ENCODE measurements at regions of chr10 and their contacts with region 1.

Region 1: DNA sequence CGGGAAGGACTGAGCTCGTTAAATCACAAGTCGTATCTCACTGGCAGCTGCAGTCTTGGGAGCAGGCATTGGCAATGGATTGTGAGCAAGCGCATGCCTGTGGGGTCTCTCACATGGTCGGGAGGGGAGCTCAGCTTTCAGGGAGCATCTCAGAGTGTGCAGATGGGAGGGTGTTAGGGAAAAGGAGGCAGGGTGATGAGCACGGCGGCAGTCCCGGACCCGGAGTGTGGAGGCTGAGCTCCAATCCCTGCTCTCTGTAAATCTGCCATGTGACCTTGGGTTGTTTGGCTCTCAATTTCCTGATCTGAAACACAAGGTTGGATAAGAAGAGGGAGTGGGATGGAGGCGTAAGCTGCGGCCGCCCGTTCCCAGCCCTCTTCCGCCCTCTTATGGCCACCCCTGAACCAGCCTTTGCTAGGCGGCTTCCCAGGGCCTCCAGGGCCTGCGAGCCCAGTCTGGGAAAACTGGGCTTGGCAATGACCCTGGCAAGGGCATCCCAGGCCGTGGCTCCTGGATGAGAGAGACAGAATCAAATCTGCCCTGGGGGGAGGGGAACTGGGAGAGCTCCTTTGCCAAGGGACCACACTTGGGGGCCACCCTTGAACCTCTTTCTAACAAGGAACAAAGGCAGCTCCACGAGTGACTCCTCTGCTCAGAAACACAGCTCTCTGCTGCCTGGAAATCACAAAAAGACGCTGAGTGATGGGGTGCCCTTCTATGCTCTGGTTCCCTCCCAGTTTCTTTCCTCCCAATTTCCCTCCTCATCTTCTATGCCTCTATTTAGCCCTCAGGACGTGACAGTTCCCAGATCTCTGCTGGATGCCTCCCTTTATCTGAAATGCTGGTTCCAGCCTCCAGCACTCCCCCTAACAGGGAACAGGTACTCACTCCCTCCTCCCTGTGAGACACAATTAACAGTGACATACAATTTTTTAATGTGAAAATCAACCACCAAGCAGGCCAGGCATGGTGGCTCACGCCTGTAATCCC is 41.7 kb upstream of the LOXL4 start:
- DNase-seq: peak; percentile 30 to 43 (median 31)
- H3K4me3 ChIP-seq: no peak overlapping the region
- H3K27ac ChIP-seq: no peak overlapping the region
- H3K4me1 ChIP-seq: peaks cover 0 to 2% (median 0%) of the 10 kb centered on the region in 4 experiments
- H3K27me3 ChIP-seq: peaks cover 0 to 24% (median 10%) of the 10 kb centered on the region in 5 experiments

Region 2: GRCh38 chr10:98170249-98171117 is 139.2 kb before region 1 on chr10:
- CTCF ChIA-PET with region 1: interaction called, 36 read pairs
- POLR2A ChIA-PET with region 1: no interaction called
- DNase-seq: peak; percentile 39 to 51 (median 42)
- H3K4me3 ChIP-seq: no peak overlapping the region
- H3K27ac ChIP-seq: no peak overlapping the region
- H3K4me1 ChIP-seq: peaks cover 0 to 6% (median 1%) of the 10 kb centered on the region in 4 experiments
- H3K27me3 ChIP-seq: no peaks in the 10 kb centered on the region

Region 3: DNA sequence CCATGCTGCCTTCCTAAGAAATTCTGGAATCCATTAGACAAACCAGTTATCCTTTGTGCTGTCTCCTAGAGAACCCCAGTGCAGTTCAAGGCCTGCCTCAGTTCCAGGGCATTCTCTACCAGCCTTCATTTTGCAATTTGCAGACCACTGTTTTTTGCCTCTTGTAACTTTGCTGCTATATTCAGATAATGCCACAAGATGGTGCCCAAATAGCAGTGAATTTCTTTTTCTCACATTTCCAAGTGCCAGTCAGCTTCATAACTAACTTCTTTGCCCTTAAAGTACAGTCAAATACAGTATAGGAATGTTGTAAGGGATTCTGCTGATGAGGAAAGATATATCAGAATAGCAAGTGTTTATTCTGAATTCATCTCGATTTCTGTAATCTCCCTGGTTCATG is 66.8 kb before region 1 on chr10:
- CTCF ChIA-PET with region 1: interaction called, 22 read pairs
- POLR2A ChIA-PET with region 1: no interaction called
- DNase-seq: peak; percentile 30 to 58 (median 55)
- H3K4me3 ChIP-seq: no peak overlapping the region
- H3K27ac ChIP-seq: no peak overlapping the region
- H3K4me1 ChIP-seq: peaks cover 0 to 6% (median 4%) of the 10 kb centered on the region in 4 experiments
- H3K27me3 ChIP-seq: no peaks in the 10 kb centered on the region

Region 4: DNA sequence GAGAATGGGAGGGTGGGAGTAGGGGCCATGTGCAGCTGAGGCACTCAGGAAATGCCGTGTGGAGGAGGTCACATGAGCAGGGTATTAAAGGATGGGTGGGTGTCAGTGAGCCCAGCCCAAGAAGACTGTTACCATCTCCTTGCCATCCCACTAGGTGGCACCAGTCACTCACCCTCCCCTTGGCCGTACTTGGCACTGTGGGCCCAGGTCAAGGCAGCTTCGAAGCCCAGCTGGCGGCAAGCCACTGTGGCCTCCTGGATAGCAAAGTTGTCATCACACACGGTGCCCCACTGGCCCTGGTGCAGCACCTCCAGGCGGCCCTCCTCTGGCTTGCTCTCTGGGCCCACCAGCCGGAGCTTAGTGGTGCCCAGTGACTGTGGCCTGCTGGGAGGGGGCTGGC is 47.1 kb before region 1 on chr10:
- CTCF ChIA-PET with region 1: interaction called, 27 read pairs
- POLR2A ChIA-PET with region 1: no interaction called
- DNase-seq: peak; percentile 46 to 63 (median 63)
- H3K4me3 ChIP-seq: no peak overlapping the region
- H3K27ac ChIP-seq: no peak overlapping the region
- H3K4me1 ChIP-seq: peaks cover 0 to 15% (median 10%) of the 10 kb centered on the region in 4 experiments
- H3K27me3 ChIP-seq: no peaks in the 10 kb centered on the region

Region 5: GRCh38 chr10:98293560-98294269 is 15.9 kb before region 1 on chr10:
- CTCF ChIA-PET with region 1: interaction called, 10 read pairs
- POLR2A ChIA-PET with region 1: no interaction called
- DNase-seq: peak in 1 of 3 donors; percentile 19
- H3K4me3 ChIP-seq: no peak overlapping the region
- H3K27ac ChIP-seq: no peak overlapping the region
- H3K4me1 ChIP-seq: peaks cover 0 to 10% (median 0%) of the 10 kb centered on the region in 4 experiments
- H3K27me3 ChIP-seq: peaks cover 0 to 9% (median 0%) of the 10 kb centered on the region in 5 experiments